ENCODE measurements at regions of chr14 and their contacts with region 1.

Region 1: DNA sequence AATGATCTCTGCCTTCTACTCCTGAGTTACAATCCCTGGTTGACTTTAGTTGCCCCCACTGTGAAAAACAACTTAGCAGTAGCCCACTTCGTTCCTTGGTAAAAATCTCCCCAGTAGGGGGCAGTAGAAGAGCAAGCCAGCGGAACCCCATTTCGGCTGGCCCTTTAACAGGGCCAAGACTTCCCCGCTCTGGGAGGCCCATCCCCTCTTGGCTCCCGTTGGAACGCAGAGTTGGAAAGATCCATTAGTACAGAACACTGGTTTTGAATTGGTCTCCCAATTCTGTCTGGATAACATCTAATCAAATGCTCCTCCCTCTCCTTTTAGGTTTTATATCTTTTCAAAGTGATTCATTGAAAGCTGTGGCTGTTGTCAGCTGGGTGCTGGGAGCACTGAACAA is 1133.3 kb downstream of the BCL11B start:
- H3K4me3 Mint-ChIP-seq: no peak overlapping the region
- H3K27ac Mint-ChIP-seq: no peak overlapping the region
- H3K4me1 Mint-ChIP-seq: no peaks in the 10 kb centered on the region
- H3K27me3 Mint-ChIP-seq: peaks cover 18% of the 10 kb centered on the region

Region 2: GRCh38 chr14:97959251-97959650 is 179.4 kb before region 1 on chr14:
- intact Hi-C with region 1: no loop called
- H3K4me3 Mint-ChIP-seq: no peak overlapping the region
- H3K27ac Mint-ChIP-seq: no peak overlapping the region
- H3K4me1 Mint-ChIP-seq: no peaks in the 10 kb centered on the region
- H3K27me3 Mint-ChIP-seq: no peaks in the 10 kb centered on the region

Region 3: DNA sequence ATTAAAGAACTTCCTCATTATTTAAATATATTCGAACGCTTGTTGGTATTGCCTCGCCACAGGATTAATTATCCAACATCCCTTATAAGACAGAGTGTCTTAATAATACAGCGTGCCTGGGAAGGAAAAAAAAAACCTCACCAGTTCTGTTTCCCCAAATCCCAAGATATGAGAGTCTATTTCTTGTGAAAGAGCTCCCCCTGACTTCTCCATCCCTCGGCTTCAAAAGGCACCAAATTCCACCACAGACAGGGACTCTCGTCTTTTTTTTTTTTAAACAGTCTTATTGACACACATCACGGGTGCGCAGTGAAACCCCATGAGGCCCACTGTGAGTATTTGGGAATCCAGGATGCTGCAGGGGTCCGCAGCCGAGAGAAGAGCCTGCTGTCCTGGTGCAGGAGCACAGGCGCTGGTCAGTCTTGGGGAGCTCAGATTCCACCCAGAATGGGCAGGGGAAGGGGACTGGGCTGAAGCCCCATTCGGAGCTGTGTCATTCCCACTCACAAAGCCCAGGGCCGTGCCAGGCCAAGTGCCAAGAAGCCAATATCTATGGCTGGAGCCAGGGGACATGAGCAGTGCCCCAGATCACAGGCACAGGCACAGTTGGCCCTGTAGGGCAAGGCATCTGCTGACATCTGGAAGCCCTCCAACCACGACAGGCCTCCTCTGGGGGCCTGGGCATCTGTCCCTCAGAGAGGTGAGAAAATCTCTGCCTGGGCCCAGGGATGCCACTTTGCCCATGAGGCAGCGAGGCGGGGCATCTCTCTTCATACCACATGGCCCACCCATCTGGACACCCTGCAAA is 1061.4 kb after region 1 on chr14:
- intact Hi-C with region 1: loop called (anchors 5 kb)
- H3K4me3 Mint-ChIP-seq: no peak overlapping the region
- H3K27ac Mint-ChIP-seq: no peak overlapping the region
- H3K4me1 Mint-ChIP-seq: no peaks in the 10 kb centered on the region
- H3K27me3 Mint-ChIP-seq: peaks cover 11% of the 10 kb centered on the region

Region 4: GRCh38 chr14:99266181-99267178 is 1127.8 kb after region 1 on chr14:
- intact Hi-C with region 1: loop called (anchors 1 kb)
- H3K4me3 Mint-ChIP-seq: no peak overlapping the region
- H3K27ac Mint-ChIP-seq: no peak overlapping the region
- H3K4me1 Mint-ChIP-seq: peaks cover 10% of the 10 kb centered on the region
- H3K27me3 Mint-ChIP-seq: peaks cover 91% of the 10 kb centered on the region